Cardiac septum (tissue), 1 donor: ENCODE measurements at regions of chr3 and their contacts with region 1.

Region 1: DNA sequence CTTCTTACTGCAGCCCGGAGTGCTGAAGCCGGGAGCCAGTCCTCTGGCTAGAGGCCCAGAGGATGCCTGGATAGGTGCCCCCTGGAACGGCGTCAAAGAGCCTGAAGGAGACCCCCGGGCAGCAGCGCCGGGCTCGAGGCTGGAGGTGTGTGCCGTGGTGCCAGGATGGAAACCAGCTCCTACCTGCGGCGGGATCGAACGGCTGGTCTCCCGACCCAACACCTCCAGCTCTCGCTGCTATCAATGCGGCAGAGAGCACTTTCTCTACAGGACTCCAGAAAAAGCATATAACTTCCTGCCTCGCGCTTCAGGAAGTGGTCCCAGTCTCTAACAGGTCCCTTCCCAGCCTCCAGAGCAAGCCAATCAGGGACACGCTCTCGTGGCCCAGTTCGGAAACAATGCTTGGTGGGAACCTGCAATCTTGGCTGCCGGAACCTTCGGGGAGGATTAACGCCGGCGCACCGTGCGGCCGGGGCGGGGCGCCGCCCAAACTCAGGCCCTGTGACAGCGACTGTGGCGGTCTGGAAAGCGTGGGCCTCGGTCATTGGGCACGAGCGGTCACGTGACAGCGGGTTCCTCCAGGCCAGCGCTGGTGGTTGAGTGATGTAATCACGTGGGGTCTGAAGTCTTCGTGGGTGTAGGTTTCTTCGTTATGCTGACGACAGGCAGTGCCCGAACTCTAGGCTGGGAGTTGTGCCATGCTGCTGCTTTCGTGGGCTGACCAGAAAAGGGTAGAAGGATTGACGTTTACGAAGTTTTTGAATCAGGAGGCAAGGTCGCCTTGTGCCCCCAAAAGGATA is at the start of gene SLC33A1:
- DNase-seq: peak; percentile 100
- total RNA-seq, gene SLC33A1: 29.9 TPM

Region 2: GRCh38 chr3:155805802-155806618 is 48.3 kb before region 1 on chr3 and contains the start of gene C3orf33:
- intact Hi-C with region 1: loop called (anchors 2 kb)
- DNase-seq: peak; percentile 89
- total RNA-seq, gene C3orf33: 7.2 TPM

Region 3: DNA sequence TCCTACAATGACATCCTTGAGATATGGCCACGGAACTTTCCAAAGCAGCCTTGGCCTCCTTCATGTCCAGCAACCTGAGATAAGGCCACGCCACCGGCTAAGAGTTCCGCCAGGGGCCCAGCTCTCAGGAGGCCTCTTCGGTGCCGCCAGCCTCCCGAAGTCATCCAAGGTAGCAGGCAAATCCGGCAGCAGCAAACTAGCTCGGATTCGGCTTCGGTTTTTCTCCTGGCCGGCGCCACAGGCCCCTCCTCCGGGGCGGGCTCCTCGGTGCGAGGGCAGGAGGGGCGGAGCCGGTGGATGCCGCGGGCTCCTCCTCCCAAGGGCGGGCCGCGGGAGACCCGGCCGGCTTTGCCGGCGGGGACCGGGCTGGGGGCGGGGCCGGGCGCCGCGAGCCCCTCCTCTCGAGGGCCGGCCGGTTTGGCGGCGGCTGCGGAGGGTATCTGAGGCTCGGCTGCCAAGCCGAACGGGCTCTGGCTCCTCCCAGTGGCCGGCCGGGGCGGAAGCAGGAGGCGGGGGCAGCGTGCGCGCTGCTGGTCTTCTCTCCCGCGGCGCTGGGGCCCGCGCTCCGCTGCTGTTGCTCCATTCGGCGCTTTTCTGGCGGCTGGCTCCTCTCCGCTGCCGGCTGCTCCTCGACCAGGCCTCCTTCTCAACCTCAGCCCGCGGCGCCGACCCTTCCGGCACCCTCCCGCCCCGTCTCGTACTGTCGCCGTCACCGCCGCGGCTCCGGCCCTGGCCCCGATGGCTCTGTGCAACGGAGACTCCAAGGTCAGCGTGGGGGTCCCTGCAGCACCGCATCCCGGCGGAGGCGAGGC is 16.0 kb after region 1 on chr3 and contains the start of gene GMPS:
- intact Hi-C with region 1: loop called (anchors 1 kb)
- DNase-seq: peak; percentile 98
- total RNA-seq, gene GMPS: 27.7 TPM

Region 4: DNA sequence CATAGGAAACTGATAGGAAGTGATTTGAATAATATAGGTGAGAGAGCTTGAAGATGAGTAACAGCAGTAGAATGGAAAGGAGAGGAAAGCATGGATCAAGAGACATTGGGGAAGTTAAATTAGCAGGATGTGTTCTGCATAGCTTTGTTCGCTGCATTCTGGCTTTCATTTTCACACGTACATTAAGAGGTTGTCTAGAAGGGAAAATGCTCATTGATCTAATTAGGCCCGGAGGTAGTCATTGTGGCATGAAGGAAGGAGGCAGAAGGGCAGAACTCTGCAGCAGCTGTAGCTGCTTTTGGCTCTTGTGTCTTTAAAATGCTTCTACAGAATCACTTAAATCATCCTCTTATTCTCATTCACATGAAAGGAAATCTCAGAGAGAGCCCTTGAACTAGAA is 306.3 kb after region 1 on chr3:
- intact Hi-C with region 1: no loop called
- DNase-seq: no peak